Activated CD4-positive, alpha-beta T cell treated with anti-CD3 and anti-CD28 coated beads for 36 hours (primary cell): ENCODE measurements at regions of chr18 and their contacts with region 1.

Region 1: DNA sequence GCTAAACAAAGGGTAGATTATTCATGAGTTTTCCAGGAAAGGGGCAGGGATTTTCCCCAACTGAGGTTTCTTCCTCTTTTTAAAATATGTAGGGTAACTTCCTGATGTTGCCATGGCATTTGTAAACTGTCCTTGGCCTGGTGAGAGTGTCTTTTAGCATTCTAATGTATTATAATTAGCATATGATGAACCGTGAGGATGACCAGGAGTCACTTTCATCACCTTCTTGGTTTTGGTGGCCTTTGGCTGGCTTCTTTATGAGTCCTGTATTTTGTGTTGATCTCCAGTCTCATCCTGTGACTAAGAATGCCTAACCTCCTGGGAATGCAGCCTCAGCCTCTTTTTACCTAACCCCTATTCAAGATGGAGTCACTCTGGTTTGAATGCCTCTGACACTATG is 391.0 kb upstream of the LINC00305 start:
- DNase-seq: no peak
- ATAC-seq: no peak
- H3K4me3 Mint-ChIP-seq: no peak overlapping the region
- H3K27ac Mint-ChIP-seq: no peak overlapping the region
- H3K4me1 Mint-ChIP-seq: no peaks in the 10 kb centered on the region
- H3K27me3 Mint-ChIP-seq: no peaks in the 10 kb centered on the region

Region 2: GRCh38 chr18:64659196-64659595 is 119.3 kb after region 1 on chr18:
- CTCF ChIA-PET with region 1: no interaction called
- POLR2A ChIA-PET with region 1: no interaction called
- intact Hi-C with region 1: no loop called
- DNase-seq: no peak
- ATAC-seq: no peak
- H3K4me3 Mint-ChIP-seq: no peak overlapping the region
- H3K27ac Mint-ChIP-seq: no peak overlapping the region
- H3K4me1 Mint-ChIP-seq: no peaks in the 10 kb centered on the region
- H3K27me3 Mint-ChIP-seq: no peaks in the 10 kb centered on the region

Region 3: DNA sequence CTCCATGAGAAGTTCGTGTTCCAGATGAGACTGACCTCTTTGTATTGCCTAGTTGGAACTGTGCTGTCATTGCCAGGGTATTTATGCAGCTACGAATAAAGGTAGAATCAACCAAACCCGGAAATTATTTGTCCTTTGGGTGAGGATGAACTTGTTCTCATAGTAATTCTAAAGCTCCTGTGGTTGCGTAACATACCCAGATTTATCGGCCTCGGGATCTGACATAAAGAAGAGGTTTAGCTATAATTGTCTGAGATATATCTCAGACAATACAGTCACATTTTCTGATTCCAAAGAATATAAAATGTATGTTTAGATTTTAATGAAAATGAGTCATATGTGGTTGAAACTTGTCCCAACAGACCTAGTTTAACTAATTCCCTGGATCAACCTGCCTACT is 237.7 kb after region 1 on chr18:
- CTCF ChIA-PET with region 1: no interaction called
- POLR2A ChIA-PET with region 1: no interaction called
- intact Hi-C with region 1: no loop called
- DNase-seq: no peak
- ATAC-seq: no peak
- H3K4me3 Mint-ChIP-seq: no peak overlapping the region
- H3K27ac Mint-ChIP-seq: no peak overlapping the region
- H3K4me1 Mint-ChIP-seq: no peaks in the 10 kb centered on the region
- H3K27me3 Mint-ChIP-seq: no peaks in the 10 kb centered on the region

Region 4: DNA sequence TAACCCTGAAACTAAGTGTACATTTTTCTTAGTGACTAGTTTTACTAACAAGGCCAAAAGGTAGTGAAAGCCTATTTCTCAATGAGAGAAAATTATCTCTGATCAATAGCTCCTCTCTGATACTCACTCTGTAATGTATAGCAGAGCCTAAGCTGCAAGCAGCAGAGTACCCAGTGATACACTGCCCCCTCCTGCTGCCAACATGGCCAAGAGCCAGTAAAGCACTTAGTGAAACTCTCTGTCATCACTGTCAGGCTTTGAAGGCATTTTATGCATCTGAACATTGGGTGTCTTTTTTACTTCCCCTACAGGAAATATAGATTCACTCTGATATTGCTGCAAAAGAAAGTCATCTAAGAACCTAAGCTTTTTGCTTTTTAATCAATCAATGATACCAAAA is 426.8 kb after region 1 on chr18:
- CTCF ChIA-PET with region 1: no interaction called
- POLR2A ChIA-PET with region 1: no interaction called
- intact Hi-C with region 1: no loop called
- DNase-seq: no peak
- ATAC-seq: no peak
- H3K4me3 Mint-ChIP-seq: no peak overlapping the region
- H3K27ac Mint-ChIP-seq: no peak overlapping the region
- H3K4me1 Mint-ChIP-seq: no peaks in the 10 kb centered on the region
- H3K27me3 Mint-ChIP-seq: no peaks in the 10 kb centered on the region

Region 5: GRCh38 chr18:65651192-65651591 is 1111.3 kb after region 1 on chr18:
- CTCF ChIA-PET with region 1: no interaction called
- POLR2A ChIA-PET with region 1: no interaction called
- intact Hi-C with region 1: loop called in 1 of 2 experiments (anchors 10 kb)
- DNase-seq: no peak
- ATAC-seq: no peak
- H3K4me3 Mint-ChIP-seq: no peak overlapping the region
- H3K27ac Mint-ChIP-seq: no peak overlapping the region
- H3K4me1 Mint-ChIP-seq: no peaks in the 10 kb centered on the region
- H3K27me3 Mint-ChIP-seq: no peaks in the 10 kb centered on the region